Esophagus squamous epithelium (tissue), 5 donors: ENCODE measurements at regions of chr21 and their contacts with region 1.

Region 1: DNA sequence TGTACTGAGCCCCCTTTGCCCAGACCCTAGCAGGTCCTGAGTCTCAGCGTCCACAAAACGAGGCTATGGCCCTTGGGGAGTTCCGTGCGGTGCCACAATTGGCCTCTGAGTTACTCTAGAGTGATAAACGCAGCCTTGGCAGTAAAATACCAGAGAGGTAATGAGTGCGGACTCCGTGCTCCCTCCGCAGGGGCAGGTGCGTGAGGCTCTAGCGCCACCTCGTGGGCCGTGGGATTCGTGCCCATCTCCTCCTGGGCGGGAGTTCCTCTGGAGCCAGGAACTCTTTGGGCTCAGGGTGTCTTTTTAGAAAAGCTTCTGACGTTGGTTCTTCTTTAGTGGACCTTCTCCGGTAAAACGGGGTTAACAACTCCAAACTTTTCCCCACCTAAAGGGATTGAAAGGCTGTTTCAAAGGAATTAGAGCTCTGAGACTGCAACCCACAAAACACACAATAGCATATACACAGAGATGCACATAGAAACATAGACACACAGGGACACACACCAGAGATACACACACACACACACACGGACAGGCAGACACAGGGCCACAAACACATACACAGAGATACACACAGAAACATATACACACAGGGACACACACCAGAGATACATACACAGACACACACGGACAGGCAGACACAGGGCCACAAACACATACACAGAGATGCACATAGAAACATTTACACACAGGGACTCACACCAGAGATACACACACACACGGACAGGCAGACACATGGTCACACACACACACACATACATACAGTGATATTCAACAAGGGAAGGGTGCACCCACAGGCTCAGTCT is 99.4 kb downstream of the KCNJ15 start:
- DNase-seq: no peak
- H3K4me3 ChIP-seq: no peak overlapping the region
- H3K27ac ChIP-seq: no peak overlapping the region
- H3K4me1 ChIP-seq: peaks cover 9 to 24% (median 14%) of the 10 kb centered on the region in 3 donors
- H3K27me3 ChIP-seq: peaks cover 0 to 13% (median 0%) of the 10 kb centered on the region in 4 donors
- CTCF ChIP-seq: peak; percentile 81 to 98 (median 94)
- POLR2A ChIP-seq: no peak

Region 2: GRCh38 chr21:37711836-37712568 is 644.2 kb before region 1 on chr21:
- intact Hi-C with region 1: loop called (anchors 10 kb)
- DNase-seq: no peak
- H3K4me3 ChIP-seq: no peak overlapping the region
- H3K27ac ChIP-seq: no peak overlapping the region
- H3K4me1 ChIP-seq: no peaks in the 10 kb centered on the region
- H3K27me3 ChIP-seq: peaks cover 0 to 5% (median 0%) of the 10 kb centered on the region in 4 donors
- CTCF ChIP-seq: peak in 5 of 6 experiments; percentile 59 to 84 (median 75)
- POLR2A ChIP-seq: no peak

Region 3: DNA sequence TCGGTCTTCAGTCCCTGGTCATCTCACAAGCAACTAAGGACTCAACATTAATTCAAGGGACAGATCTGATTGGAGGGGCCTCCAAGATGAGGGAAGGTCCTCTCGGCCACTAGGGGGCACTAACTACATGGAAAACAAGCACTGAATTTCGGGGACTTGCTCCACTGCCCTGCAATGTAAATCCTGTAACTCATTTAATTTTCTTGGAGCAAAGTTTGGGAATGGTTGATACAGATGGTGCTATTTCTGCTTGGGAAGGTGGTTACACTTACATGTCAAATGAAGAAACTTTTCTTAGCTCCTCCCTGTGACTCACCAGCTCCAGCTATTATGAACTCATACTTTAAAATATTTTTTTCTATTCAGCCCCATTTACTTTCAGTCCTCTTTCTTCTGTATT is 196.8 kb before region 1 on chr21:
- intact Hi-C with region 1: loop called (anchors 5 kb)
- DNase-seq: peak; percentile 2
- H3K4me3 ChIP-seq: no peak overlapping the region
- H3K27ac ChIP-seq: no peak overlapping the region
- H3K4me1 ChIP-seq: peaks cover 0 to 12% (median 6%) of the 10 kb centered on the region in 3 donors
- H3K27me3 ChIP-seq: peaks cover 0 to 47% (median 0%) of the 10 kb centered on the region in 4 donors
- CTCF ChIP-seq: peak; percentile 63 to 78 (median 76)
- POLR2A ChIP-seq: no peak

Region 4: DNA sequence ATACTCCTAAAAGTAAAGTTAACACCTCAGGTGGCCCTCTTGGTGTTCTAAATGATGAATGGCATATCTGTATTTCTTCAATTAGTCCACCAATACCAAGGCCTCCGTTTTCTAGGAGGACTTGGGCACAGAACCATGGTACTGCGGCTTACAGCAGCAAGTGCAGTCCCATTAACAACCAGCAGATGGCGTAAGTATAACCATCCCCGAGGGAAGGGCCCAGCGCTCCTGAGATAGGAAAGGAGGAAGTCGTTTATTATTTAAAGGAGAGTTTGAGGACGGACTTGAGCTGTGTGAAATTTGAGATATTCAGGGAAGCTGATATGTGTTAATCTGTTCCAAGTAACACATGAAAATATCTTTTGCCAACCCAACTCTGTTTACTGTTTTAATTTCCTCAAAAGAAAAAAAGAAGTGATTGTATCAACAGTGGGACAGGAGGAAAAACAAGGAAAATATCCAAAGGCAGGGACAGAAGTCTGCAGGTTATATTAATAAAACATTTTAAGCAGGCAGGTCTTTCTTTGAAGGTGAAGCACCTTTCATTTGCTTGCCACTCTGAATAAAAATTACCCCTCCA is 137.1 kb before region 1 on chr21:
- intact Hi-C with region 1: loop called (anchors 2 kb)
- DNase-seq: no peak
- H3K4me3 ChIP-seq: no peak overlapping the region
- H3K27ac ChIP-seq: peak overlapping the region in 2 of 4 donors; percentile 40 to 67
- H3K4me1 ChIP-seq: peaks cover 2 to 16% (median 4%) of the 10 kb centered on the region in 3 donors
- H3K27me3 ChIP-seq: no peaks in the 10 kb centered on the region
- CTCF ChIP-seq: peak; percentile 62 to 99 (median 98)
- POLR2A ChIP-seq: no peak

Region 5: DNA sequence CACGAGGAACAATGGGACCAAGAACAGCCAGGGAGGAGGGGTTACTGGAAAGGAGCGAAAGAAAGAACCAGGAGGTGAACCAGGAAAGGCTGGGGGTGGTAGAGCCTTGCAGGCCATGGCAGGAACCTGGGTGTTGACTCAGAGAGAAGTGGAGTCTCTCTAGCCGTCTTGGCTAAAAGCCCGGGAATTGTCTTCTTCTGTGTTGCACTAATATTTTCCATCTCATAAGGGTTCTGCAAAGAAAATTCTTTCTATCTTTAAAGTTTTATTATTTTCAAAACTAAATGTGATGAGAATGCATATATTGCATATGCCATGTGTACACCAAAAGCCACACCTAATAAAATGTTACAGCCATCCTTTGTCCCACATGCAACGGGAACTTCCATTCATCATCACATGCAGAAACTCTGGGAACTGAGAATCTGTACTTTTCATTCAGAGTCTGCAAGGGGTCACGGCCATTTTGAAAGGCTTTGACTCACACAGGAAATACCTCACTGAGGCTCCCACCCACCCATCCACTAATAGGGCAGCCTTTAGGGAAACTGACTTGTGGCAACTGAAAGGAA is 104.1 kb after region 1 on chr21:
- intact Hi-C with region 1: no loop called
- DNase-seq: no peak
- H3K4me3 ChIP-seq: peak overlapping the region in 1 of 4 donors; percentile 1
- H3K27ac ChIP-seq: peak overlapping the region; percentile 78 to 87 (median 80)
- H3K4me1 ChIP-seq: peaks cover 13 to 50% (median 33%) of the 10 kb centered on the region in 3 donors
- H3K27me3 ChIP-seq: no peaks in the 10 kb centered on the region
- CTCF ChIP-seq: no peak
- POLR2A ChIP-seq: no peak